Left colon (tissue), 2 donors: ENCODE measurements at regions of chr11 and their contacts with region 1.

Region 1: GRCh38 chr11:122505304-122506006 is 150.1 kb upstream of the UBASH3B start:
- DNase-seq: peak; percentile 36 to 68
- ATAC-seq: peak; percentile 81

Region 2: GRCh38 chr11:121648306-121648705 is 857.1 kb before region 1 on chr11:
- intact Hi-C with region 1: loop called (anchors 5 to 10 kb)
- DNase-seq: no peak
- ATAC-seq: no peak

Region 3: DNA sequence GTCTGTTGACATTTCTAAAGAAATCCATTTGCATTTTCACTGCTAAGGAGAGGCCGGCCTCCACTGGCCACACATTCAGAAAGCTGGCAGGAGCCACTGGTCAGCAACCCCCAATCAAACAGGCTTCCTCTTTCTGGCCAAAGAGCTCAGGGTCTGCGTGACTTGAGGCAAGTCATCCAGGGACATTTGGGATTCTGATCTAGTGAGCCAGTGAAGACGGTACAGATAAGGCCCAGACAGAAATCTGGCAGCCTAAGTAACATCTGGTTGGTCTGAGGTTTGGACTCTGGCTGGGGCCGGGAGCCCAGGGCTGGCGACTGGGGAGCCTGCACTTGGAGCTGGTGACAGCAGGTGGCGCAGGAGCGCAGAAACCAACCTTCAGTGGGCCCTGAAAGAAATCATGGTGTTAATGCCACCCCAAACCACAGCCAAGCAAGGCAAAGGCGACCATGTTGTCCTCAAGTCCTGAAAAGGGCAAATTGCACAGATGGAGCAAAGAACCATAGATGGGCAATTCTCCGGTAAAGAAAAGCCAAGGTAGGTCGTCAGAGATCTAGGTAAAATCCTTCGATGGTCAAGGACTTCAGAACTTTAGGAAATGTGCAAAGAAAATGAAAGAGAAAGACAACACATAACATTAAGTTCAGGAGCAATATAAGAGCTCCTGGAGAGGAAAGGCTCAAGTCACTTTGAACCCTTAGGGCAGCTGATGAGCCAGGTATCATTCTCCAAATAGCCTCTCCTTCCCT is 290.0 kb before region 1 on chr11:
- intact Hi-C with region 1: loop called in 1 of 2 experiments (anchors 5 kb)
- DNase-seq: peak; percentile 30 to 56
- ATAC-seq: peak; percentile 54